ENCODE measurements at regions of chr5 and their contacts with region 1.

Region 1: DNA sequence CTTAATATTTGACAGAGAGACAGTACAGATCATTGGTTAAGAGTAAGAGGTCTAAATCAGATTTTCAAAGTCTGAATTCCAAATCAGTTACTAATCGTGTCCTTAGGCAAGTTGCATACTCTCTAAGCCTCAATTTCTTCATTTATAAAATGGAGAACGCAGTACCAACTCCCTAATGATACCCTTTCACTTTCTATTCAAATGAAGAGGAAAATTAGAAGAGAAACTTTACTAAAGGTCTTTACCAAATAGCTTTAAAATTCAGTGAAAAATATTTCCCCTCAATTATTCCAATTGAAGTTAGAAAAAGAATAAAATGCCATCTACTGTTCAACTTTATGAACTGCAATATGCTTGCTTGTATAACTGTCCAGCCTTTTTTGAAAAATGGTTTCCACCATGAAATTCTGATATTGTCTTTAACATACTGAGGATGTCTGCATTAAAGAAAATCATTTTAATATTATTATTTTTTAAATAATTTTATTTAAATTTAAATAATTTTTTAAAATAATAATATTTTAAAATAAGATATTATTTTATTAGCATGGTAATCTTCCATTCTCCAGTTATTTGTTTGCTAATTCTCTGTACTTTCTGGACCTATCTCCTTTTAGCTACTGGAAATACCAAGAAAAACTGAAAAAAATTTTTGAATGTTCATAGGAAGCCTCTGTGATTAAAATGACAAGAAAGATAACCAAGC is 36.0 kb downstream of the POC5 start:
- DNase-seq: no peak
- H3K4me3 ChIP-seq: no peak overlapping the region
- H3K27ac ChIP-seq: peak overlapping the region in 1 of 4 donors; percentile 1
- H3K4me1 ChIP-seq: peaks cover 0 to 4% (median 0%) of the 10 kb centered on the region in 4 donors
- H3K27me3 ChIP-seq: no peaks in the 10 kb centered on the region
- CTCF ChIP-seq: peak; percentile 72 to 81 (median 77)
- EP300 ChIP-seq: no peak
- POLR2A ChIP-seq: no peak

Region 2: GRCh38 chr5:75053304-75054133 is 627.8 kb before region 1 on chr5:
- in situ Hi-C with region 1: no loop called
- intact Hi-C with region 1: loop called (anchors 10 kb)
- DNase-seq: peak; percentile 63
- H3K4me3 ChIP-seq: peak overlapping the region; percentile 70 to 93 (median 89)
- H3K27ac ChIP-seq: peak overlapping the region; percentile 78 to 95 (median 90)
- H3K4me1 ChIP-seq: peaks cover 11 to 40% (median 34%) of the 10 kb centered on the region in 4 donors
- H3K27me3 ChIP-seq: no peaks in the 10 kb centered on the region
- CTCF ChIP-seq: peak in 1 of 5 experiments; percentile 13
- EP300 ChIP-seq: no peak
- POLR2A ChIP-seq: peak; percentile 69

Region 3: DNA sequence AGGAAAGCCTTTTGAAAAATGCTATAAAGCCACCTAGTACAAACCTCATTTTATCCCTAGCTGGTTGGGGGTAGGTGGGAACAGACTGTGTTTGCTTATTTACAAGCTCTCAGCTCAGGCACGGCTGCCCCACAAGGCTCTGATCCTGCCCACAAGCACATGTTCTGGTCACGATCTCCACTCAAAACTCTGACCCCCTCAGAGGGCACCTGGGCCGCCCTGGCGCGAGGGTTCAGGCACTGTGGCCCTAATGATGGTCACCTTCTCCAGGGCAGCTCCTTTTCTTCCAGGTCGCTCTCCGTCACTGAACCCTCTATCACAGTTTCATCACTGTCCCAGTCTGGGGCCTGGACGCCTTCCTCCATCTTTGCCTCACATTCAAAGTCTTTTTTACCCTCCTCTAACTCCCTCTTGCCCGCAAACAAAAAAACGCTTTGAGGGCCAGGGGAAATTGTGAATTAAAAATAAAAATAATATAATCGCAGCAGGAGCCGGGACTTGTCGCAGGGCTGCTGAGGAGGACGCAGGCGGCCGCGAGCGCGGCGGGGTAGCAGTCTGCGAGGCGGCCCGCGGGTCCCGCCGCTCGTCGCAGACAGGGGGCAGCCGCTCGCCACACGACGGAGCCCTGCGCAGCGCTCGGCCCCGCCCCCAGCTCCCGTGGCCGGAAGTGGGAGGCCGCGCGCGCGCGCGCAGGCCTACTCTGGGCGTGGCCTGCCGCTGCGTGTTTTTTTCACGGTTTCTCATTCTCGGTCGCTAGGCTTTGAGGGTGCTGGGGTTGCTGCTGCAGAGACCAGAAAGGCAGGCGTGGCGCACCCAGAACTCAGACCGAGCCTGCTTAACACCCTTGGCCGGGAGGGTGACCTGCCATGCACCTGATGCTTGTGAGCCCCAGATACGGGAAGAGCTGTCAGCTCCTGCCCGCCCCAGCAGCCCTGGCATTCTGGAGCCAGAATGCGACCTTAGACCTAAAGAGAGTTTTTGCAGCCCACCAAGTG is 444.7 kb before region 1 on chr5 and contains the start of gene ANKRD31:
- in situ Hi-C with region 1: loop called in 2 of 4 experiments (anchors 10 to 25 kb)
- intact Hi-C with region 1: loop called (anchors 10 kb)
- DNase-seq: peak; percentile 91
- H3K4me3 ChIP-seq: peak within 1 kb of the TSS; percentile 29 to 75 (median 56)
- H3K27ac ChIP-seq: peak within 1 kb of the TSS; percentile 74 to 84 (median 78)
- H3K4me1 ChIP-seq: peaks cover 0 to 12% (median 2%) of the 10 kb centered on the region in 4 donors
- H3K27me3 ChIP-seq: no peaks in the 10 kb centered on the region
- CTCF ChIP-seq: peak; percentile 48 to 87 (median 77)
- EP300 ChIP-seq: no peak
- POLR2A ChIP-seq: peak; percentile 38
- total RNA-seq, gene ANKRD31: 0.16 TPM in 1 of 4 donors, not detected in the others

Region 4: GRCh38 chr5:75395277-75395676 is 286.0 kb before region 1 on chr5:
- in situ Hi-C with region 1: loop called in 1 of 4 experiments (anchors 25 kb)
- intact Hi-C with region 1: no loop called
- DNase-seq: no peak
- H3K4me3 ChIP-seq: no peak overlapping the region
- H3K27ac ChIP-seq: no peak overlapping the region
- H3K4me1 ChIP-seq: no peaks in the 10 kb centered on the region
- H3K27me3 ChIP-seq: no peaks in the 10 kb centered on the region
- CTCF ChIP-seq: no peak
- EP300 ChIP-seq: no peak
- POLR2A ChIP-seq: no peak

Region 5: GRCh38 chr5:75584641-75585040 is 96.6 kb before region 1 on chr5:
- in situ Hi-C with region 1: loop called in 1 of 4 experiments (anchors 10 kb)
- intact Hi-C with region 1: no loop called
- DNase-seq: no peak
- H3K4me3 ChIP-seq: no peak overlapping the region
- H3K27ac ChIP-seq: no peak overlapping the region
- H3K4me1 ChIP-seq: no peaks in the 10 kb centered on the region
- H3K27me3 ChIP-seq: no peaks in the 10 kb centered on the region
- CTCF ChIP-seq: peak; percentile 24 to 39 (median 26)
- EP300 ChIP-seq: no peak
- POLR2A ChIP-seq: no peak

Region 6: DNA sequence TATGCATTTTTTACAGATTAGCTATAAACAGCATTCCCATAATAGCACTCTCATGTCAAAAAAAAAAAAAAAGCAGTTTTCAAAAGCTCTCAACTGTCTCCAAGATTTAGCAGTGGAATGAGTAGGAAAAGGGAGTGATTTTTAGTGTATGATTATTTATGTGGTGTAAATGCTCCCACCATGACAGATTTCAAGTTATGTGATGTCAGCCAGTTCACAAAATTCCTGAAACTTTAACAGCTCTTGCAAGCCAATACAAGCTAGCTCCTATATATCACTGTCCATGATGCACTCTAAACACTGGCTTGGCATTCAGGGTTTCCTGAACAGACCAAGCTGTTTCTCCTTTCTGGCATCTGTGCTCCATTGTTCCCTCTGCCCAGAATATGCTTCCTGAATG is 77.9 kb before region 1 on chr5:
- in situ Hi-C with region 1: loop called in 1 of 4 experiments (anchors 10 kb)
- intact Hi-C with region 1: no loop called
- DNase-seq: no peak
- H3K4me3 ChIP-seq: no peak overlapping the region
- H3K27ac ChIP-seq: no peak overlapping the region
- H3K4me1 ChIP-seq: no peaks in the 10 kb centered on the region
- H3K27me3 ChIP-seq: no peaks in the 10 kb centered on the region
- CTCF ChIP-seq: no peak
- EP300 ChIP-seq: no peak
- POLR2A ChIP-seq: no peak

Region 7: DNA sequence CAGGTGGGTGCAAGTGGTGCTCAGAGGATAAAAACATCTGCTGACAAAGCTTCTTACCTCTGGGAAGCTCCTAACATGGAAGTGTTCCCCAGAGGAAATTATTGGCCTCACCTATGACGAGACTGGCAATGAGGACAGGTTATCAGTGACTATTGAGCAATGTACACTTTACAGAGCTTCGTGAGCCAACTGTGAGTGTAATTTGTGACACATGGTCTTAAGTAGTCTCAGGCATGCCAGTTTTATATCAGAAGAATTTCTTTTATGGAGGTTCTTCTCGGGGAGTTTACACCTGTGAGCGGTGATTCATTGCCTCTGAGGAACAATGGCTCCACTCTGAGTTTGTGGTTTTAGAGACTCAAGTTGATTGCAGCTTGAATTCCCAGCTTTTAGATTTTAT is 58.7 kb before region 1 on chr5:
- in situ Hi-C with region 1: no loop called
- intact Hi-C with region 1: no loop called
- DNase-seq: peak; percentile 38
- H3K4me3 ChIP-seq: peak overlapping the region in 1 of 4 donors; percentile 17
- H3K27ac ChIP-seq: peak overlapping the region; percentile 77 to 81 (median 78)
- H3K4me1 ChIP-seq: peaks cover 0 to 35% (median 21%) of the 10 kb centered on the region in 4 donors
- H3K27me3 ChIP-seq: no peaks in the 10 kb centered on the region
- CTCF ChIP-seq: no peak
- EP300 ChIP-seq: no peak
- POLR2A ChIP-seq: peak; percentile 26

Measured in transverse colon (tissue), 4 donors.